CD4-positive, alpha-beta memory T cell (primary cell): ENCODE measurements at regions of chr17 and their contacts with region 1.

Region 1: DNA sequence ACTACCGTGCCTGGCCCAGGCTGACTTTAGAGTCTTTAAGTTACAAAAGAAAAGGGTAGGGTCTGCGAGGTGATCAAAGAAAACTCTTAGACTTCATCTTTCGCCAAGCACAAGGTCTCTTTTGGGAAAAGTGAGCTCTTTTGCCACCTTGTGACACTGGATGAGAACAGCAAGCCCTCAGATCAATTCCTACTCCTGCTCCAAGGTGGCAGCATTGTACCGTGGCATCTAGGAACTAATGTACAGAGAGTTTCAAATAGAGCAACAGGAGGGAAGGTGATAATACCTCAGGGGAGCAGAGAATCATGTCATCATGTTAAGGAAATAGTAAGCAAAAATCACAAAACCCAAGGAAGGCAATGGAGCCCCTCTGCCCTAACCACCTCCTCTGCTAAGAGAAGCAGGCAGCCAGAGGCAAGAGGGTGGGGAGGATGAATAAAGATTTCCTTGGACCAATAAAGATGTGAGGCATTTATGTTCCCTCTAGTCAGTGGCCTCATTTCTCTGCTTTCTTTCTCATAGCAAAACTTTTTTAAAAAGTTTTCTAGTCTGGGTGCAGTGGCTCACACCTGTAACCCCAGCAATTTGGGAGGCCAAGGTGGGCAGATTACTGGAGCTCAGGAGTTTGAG is 2.1 kb upstream of the C17orf78 start:
- DNase-seq: peak; percentile 57 to 68 (median 65)
- H3K4me3 ChIP-seq: no peak overlapping the region
- H3K4me3 Mint-ChIP-seq: no peak overlapping the region
- H3K27ac ChIP-seq: no peak overlapping the region
- H3K27ac Mint-ChIP-seq: no peak overlapping the region
- H3K4me1 ChIP-seq: no peaks in the 10 kb centered on the region
- H3K4me1 Mint-ChIP-seq: peaks cover 0 to 3% (median 1%) of the 10 kb centered on the region in 4 donors
- H3K27me3 ChIP-seq: no peaks in the 10 kb centered on the region
- H3K27me3 Mint-ChIP-seq: no peaks in the 10 kb centered on the region

Region 2: DNA sequence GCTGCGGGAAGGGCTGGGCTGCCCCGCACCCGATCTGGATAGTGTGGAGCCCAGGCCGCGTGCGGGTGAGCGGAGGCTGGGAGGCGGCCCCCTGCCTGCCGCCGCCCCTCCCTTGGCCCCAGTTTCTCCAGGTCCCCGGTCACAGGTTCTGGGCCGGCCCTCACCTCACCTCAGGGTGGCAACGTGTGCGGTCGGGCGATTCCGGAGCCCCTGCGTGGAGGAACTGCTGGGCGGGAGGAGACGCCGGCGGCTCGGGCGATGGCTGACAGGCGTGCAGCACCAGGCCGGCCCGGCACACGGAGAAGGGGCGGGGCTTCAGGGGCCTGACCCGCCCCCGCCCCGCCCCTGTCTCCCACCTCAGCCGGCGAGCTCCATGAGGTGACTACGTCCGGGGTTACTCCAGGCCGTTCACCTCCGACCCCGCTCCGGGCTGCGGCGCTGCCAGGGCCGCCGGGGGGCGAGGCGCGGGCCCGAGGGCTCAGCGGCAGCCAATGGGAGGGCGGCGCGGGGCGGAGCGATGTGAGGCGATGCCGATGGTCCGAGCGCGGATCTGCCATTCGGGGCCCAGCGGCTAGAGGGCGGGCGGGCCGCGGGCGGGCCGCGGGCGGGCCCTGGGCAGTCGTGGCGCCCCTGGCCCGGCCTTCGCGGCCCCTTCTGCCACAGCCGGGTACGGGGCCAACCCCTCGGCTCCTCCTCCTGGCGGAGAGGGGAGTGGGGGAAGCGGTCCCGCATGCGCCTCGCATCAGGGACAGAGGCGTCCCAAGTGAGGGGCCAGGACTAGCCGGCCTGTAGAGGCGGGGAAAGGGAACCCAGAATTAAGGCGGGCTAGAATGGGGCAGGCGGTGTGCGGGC is 14.6 kb before region 1 on chr17:
- CTCF ChIA-PET with region 1: interaction called, 18 read pairs
- POLR2A ChIA-PET with region 1: interaction called, 4 read pairs
- intact Hi-C with region 1: no loop called
- DNase-seq: peak; percentile 86 to 94 (median 89)
- H3K4me3 ChIP-seq: peak overlapping the region; percentile 84 to 94
- H3K4me3 Mint-ChIP-seq: peak overlapping the region; percentile 87 to 93 (median 92)
- H3K27ac ChIP-seq: peak overlapping the region; percentile 53
- H3K27ac Mint-ChIP-seq: peak overlapping the region in 6 of 7 donors; percentile 57 to 94 (median 93)
- H3K4me1 ChIP-seq: peaks cover 17% of the 10 kb centered on the region
- H3K4me1 Mint-ChIP-seq: peaks cover 13 to 22% (median 17%) of the 10 kb centered on the region in 4 donors
- H3K27me3 ChIP-seq: no peaks in the 10 kb centered on the region
- H3K27me3 Mint-ChIP-seq: no peaks in the 10 kb centered on the region

Region 3: DNA sequence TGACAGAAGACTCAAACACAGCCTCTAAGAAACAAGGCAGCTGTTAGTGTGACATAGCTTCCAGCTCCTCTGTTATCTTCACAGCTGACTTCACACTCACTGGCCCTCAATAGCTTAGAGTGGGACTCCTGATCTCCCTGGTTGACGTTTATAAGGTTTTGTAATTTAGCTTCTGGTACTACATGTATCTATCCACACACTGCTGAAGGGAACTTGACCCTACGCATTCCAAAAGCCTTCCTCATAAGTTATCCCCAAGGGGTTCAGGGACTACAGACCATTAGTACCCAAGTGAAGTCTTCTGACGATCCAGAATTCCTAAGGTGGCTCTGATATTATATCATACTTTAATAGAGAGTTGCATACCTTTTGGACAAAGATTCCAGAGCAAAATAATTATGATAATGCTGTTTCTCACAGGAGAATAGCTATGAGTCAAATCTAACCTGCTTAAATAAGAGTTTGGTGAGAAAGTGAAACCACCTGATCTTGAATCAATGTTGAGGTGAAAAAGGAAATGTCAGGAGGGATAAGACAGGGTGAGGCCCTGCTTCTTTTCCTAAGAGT is 18.5 kb after region 1 on chr17:
- CTCF ChIA-PET with region 1: interaction called, 8 read pairs
- POLR2A ChIA-PET with region 1: no interaction called
- intact Hi-C with region 1: loop called (anchors 1 kb)
- DNase-seq: no peak
- H3K4me3 ChIP-seq: no peak overlapping the region
- H3K4me3 Mint-ChIP-seq: peak overlapping the region in 3 of 8 donors; percentile 3 to 55 (median 41)
- H3K27ac ChIP-seq: no peak overlapping the region
- H3K27ac Mint-ChIP-seq: peak overlapping the region in 4 of 7 donors; percentile 28 to 52 (median 46)
- H3K4me1 ChIP-seq: peaks cover 11% of the 10 kb centered on the region
- H3K4me1 Mint-ChIP-seq: peaks cover 12 to 14% (median 13%) of the 10 kb centered on the region in 4 donors
- H3K27me3 ChIP-seq: no peaks in the 10 kb centered on the region
- H3K27me3 Mint-ChIP-seq: no peaks in the 10 kb centered on the region

Region 4: DNA sequence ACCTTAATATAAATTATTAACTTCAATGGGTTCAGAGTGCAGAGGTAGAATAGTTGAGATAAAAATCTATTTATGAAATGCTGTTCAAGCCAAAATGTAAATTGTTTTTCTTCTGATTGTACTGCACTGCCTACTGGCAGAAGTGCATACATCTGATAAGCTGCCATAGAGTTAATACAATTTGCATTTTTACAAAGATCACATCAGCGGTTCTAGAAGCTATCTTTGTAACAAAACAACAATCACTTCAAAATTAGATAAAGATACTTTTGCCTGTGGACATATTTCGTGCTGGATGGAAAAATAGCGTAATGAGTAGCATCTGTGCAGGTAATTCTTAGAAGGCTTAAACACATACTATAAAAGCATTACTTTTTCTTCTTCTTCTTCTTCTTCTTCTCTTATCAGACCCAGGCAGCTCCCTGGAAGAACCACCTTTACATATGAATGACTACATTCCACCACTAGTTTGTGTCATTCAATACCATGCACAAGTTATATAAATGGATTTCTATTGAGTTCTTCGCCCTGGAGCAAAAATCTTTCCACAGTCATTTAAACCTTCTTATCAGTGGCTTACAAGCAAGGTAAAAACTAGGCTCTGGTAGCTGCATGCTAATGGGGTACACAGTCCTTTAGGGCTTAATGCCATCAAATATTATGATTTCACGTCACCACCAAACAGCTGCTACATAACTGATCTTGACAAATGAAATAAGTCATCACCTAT is 188.5 kb after region 1 on chr17:
- CTCF ChIA-PET with region 1: no interaction called
- POLR2A ChIA-PET with region 1: no interaction called
- intact Hi-C with region 1: no loop called
- DNase-seq: no peak
- H3K4me3 ChIP-seq: no peak overlapping the region
- H3K4me3 Mint-ChIP-seq: no peak overlapping the region
- H3K27ac ChIP-seq: no peak overlapping the region
- H3K27ac Mint-ChIP-seq: peak overlapping the region in 2 of 7 donors; percentile 15 to 26
- H3K4me1 ChIP-seq: no peaks in the 10 kb centered on the region
- H3K4me1 Mint-ChIP-seq: peaks cover 2 to 12% (median 11%) of the 10 kb centered on the region in 4 donors
- H3K27me3 ChIP-seq: no peaks in the 10 kb centered on the region
- H3K27me3 Mint-ChIP-seq: no peaks in the 10 kb centered on the region